ENCODE measurements at regions of chr5 and their contacts with region 1.

Region 1: DNA sequence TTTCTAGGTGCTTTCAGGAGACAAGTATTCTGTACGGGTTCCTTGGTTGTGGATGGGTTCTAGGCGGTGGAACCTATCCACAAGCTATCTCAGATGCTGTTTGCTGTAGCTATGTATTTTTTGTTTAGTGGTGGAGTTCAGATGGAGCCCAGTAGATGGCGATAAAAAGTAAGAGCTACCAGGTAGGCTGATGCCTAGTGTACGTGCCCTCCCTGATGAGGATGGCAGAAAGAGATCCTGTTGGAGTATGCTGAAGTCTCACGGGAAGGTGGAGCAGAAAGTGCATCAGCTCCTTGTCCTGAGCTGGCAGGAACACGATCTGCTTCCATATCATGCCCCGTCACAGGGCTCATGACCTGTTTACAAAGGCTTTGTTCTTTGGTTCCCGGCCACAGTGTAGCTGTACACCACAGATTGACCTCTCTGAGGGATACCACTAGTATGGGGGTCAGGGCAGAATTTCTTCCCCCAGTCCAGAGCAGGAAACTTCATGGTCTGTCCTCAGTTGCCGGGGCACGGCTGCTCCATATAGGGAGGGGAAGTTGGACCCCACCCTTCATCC is 12.6 kb upstream of the UGT3A2 start:
- DNase-seq: peak; percentile 11
- ATAC-seq: peak; percentile 99
- H3K4me3 ChIP-seq: no peak overlapping the region
- H3K27ac ChIP-seq: no peak overlapping the region
- H3K4me1 ChIP-seq: no peaks in the 10 kb centered on the region
- H3K27me3 ChIP-seq: no peaks in the 10 kb centered on the region
- CTCF ChIP-seq: peak; percentile 63 to 80 (median 70)
- EP300 ChIP-seq: no peak
- POLR2A ChIP-seq: no peak
- RAD21 ChIP-seq: peak; percentile 64

Region 2: DNA sequence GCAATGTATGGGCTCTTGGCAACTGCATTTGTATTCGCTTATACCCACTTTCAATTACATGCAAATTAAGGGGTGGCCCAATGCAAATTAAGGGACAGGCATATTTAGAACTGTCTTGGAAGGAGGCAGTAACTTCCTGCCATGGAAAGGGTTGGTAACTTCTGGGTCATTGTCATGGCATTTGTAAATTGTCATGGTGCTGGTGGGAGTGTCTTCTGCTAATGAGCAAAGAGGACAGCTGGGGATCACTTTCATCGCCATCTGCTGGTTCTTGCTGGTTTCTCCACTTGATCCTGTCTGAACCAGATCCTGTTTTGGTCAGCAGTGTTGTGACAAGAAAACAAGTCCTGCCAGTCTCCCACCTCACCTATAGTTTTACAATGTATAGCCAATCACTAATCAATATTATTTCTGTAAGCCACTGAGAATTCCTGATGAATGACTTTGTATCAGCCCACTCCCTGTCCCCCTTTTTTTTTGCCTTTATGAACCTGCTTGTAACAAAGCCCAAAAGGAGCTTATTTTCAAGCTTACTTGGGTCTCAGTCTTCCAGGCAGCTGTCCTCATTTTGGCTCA is 10.8 kb after region 1 on chr5:
- CTCF ChIA-PET with region 1: interaction called, 68 read pairs
- POLR2A ChIA-PET with region 1: interaction called, 3 read pairs
- RAD21 ChIA-PET with region 1: interaction called, 12 read pairs
- SMC1A ChIA-PET with region 1: interaction called, 14 read pairs
- in situ Hi-C with region 1: no loop called
- intact Hi-C with region 1: no loop called
- DNase-seq: no peak
- ATAC-seq: peak; percentile 89
- H3K4me3 ChIP-seq: no peak overlapping the region
- H3K27ac ChIP-seq: no peak overlapping the region
- H3K4me1 ChIP-seq: no peaks in the 10 kb centered on the region
- H3K27me3 ChIP-seq: no peaks in the 10 kb centered on the region
- CTCF ChIP-seq: peak; percentile 28 to 44 (median 28); a peak in 5 of 6 replicates
- EP300 ChIP-seq: no peak
- POLR2A ChIP-seq: no peak
- RAD21 ChIP-seq: no peak

Region 3: DNA sequence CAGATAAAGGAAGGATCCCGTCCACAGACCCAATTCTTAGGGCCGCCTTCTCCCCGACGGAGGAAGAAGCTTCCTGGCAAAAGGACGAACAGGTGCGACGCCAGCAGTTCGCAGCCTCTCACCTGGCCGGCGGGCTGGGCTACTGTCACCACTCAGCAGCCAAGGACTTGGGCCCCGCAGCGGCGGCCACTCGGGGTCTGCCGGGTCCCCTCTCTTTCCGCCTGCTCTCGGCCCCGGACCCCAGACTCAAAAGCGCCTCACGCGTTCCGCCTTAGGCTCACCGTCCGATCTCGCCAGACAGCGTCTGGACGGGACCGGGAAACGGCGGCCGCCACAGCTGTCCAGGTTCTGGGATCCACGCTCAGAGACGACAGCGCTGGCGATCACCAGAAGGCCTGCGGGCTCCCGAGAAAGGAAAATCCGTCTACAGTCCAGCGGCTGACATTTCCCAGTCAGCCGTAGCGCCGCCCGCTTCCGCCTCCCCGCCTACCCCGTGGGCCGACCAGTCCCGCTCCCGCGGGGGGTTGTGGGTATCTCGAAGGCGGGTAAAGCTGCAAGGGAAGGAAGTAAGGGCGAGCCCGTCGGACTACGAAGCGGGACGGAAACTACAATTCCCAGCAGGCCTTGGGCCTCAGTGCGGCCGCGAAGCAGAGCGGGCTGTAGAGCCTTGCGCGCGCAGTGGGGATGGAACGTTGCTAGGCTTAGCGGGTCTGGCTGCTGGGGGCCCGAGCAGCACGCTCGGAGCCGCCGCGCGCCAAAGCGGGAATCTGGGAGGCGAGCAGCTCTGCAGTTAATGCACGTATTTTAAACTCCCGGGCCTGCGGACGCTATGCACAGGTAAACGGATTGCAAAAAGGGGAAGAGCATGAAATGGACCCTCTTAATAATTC is 72.4 kb after region 1 on chr5 and contains the starts of genes LMBRD2 and SKP2:
- CTCF ChIA-PET with region 1: interaction called, 11 read pairs
- POLR2A ChIA-PET with region 1: interaction called, 3 read pairs
- RAD21 ChIA-PET with region 1: interaction called, 7 read pairs
- SMC1A ChIA-PET with region 1: interaction called, 4 read pairs
- in situ Hi-C with region 1: no loop called
- intact Hi-C with region 1: no loop called
- DNase-seq: peak; percentile 95
- ATAC-seq: peak; percentile 97
- H3K4me3 ChIP-seq: peak within 1 kb of the TSS; percentile 94
- H3K27ac ChIP-seq: peak within 1 kb of the TSS; percentile 82
- H3K4me1 ChIP-seq: no peaks in the 10 kb centered on the region
- H3K27me3 ChIP-seq: no peaks in the 10 kb centered on the region
- CTCF ChIP-seq: no peak
- EP300 ChIP-seq: no peak
- POLR2A ChIP-seq: peak; percentile 82
- RAD21 ChIP-seq: no peak
- polyA plus RNA-seq, gene LMBRD2: 0.90 to 1.8 TPM
- polyA plus RNA-seq, gene SKP2: 13.9 to 17.9 TPM

Region 4: GRCh38 chr5:36241631-36242533 is 162.6 kb after region 1 on chr5 and contains the start of gene NADK2:
- CTCF ChIA-PET with region 1: interaction called, 8 read pairs
- POLR2A ChIA-PET with region 1: no interaction called
- RAD21 ChIA-PET with region 1: interaction called, 13 read pairs
- SMC1A ChIA-PET with region 1: interaction called, 5 read pairs
- in situ Hi-C with region 1: no loop called
- intact Hi-C with region 1: loop called (anchors 5 kb)
- DNase-seq: peak; percentile 61
- ATAC-seq: peak; percentile 92
- H3K4me3 ChIP-seq: peak within 1 kb of the TSS; percentile 97
- H3K27ac ChIP-seq: peak within 1 kb of the TSS; percentile 59
- H3K4me1 ChIP-seq: peaks cover 19% of the 10 kb centered on the region
- H3K27me3 ChIP-seq: no peaks in the 10 kb centered on the region
- CTCF ChIP-seq: peak; percentile 69 to 74 (median 73)
- EP300 ChIP-seq: no peak
- POLR2A ChIP-seq: peak; percentile 71
- RAD21 ChIP-seq: peak; percentile 40; the same call in 1 of the 2 replicates
- polyA plus RNA-seq, gene NADK2: 2.4 to 3.1 TPM

Region 5: GRCh38 chr5:36507332-36507952 is 428.2 kb after region 1 on chr5:
- CTCF ChIA-PET with region 1: interaction called, 41 read pairs
- POLR2A ChIA-PET with region 1: no interaction called
- RAD21 ChIA-PET with region 1: interaction called, 4 read pairs
- SMC1A ChIA-PET with region 1: interaction called, 13 read pairs
- in situ Hi-C with region 1: loop called (anchors 10 kb)
- intact Hi-C with region 1: loop called (anchors 5 kb)
- DNase-seq: peak; percentile 3
- ATAC-seq: peak; percentile 90
- H3K4me3 ChIP-seq: no peak overlapping the region
- H3K27ac ChIP-seq: no peak overlapping the region
- H3K4me1 ChIP-seq: no peaks in the 10 kb centered on the region
- H3K27me3 ChIP-seq: no peaks in the 10 kb centered on the region
- CTCF ChIP-seq: peak; percentile 69 to 77 (median 71)
- EP300 ChIP-seq: no peak
- POLR2A ChIP-seq: no peak
- RAD21 ChIP-seq: peak; percentile 80

Region 6: GRCh38 chr5:36584009-36584875 is 505.0 kb after region 1 on chr5:
- CTCF ChIA-PET with region 1: no interaction called
- POLR2A ChIA-PET with region 1: no interaction called
- RAD21 ChIA-PET with region 1: no interaction called
- SMC1A ChIA-PET with region 1: no interaction called
- in situ Hi-C with region 1: no loop called
- intact Hi-C with region 1: no loop called
- DNase-seq: no peak
- ATAC-seq: no peak
- H3K4me3 ChIP-seq: no peak overlapping the region
- H3K27ac ChIP-seq: no peak overlapping the region
- H3K4me1 ChIP-seq: no peaks in the 10 kb centered on the region
- H3K27me3 ChIP-seq: no peaks in the 10 kb centered on the region; a peak in 1 of 4 replicates
- CTCF ChIP-seq: no peak
- EP300 ChIP-seq: no peak
- POLR2A ChIP-seq: no peak
- RAD21 ChIP-seq: no peak